SK-N-SH (cell line): ENCODE measurements at regions of chr9 and their contacts with region 1.

Region 1: DNA sequence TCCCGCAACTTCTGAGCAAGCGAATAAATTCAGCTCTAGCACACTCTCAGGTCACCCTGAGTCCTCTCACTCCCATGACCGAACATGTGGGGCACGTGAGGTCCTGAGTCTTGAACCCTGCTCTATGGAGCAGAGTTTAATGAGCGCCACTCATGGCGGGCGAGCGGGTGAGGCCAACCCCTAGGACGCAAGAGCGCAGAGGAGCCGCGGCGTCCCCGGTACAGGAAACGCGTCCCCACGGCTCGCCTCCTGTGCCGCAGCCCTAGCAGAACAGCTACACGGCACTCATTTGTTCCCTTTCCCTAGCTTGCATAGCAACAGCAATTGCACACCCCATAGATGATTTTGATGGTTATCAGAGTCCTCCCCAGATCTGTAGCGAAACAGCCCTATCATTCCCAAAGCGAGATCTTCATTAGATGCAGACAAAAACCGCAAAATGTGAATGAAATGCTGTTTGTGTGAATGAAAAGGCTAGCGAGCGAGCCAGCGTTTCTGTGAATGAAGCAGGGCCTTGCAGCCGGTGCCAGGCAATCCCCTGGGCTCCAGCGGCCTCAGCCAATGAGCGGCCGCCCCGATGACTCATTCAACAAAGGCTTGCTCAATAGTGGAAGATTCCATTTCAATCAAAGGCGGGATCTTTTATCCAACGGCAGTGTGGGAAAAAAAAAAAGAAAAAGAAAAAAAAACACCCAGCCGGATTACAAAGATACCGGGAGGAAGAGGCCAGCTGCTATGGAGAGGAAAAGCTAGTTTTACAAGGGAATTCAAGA is 1.5 kb upstream of the SHC3 start:
- DNase-seq: peak; percentile 88
- H3K4me3 ChIP-seq: peak overlapping the region; percentile 49 to 69
- H3K27ac ChIP-seq: peak overlapping the region; percentile 94 to 96
- H3K4me1 ChIP-seq: peaks cover 19 to 32% of the 10 kb centered on the region in 2 experiments
- H3K27me3 ChIP-seq: no peaks in the 10 kb centered on the region
- CTCF ChIP-seq: peak; percentile 6; the same call in 1 of the 2 replicates
- EP300 ChIP-seq: 0 out of 4 replicates have a peak, but pooled peaks of 1 of the 2 experiments have one; percentile 19
- RAD21 ChIP-seq: no peak

Region 2: GRCh38 chr9:89106224-89106851 is 73.7 kb before region 1 on chr9:
- CTCF ChIA-PET with region 1: no interaction called
- POLR2A ChIA-PET with region 1: no interaction called
- DNase-seq: no peak
- H3K4me3 ChIP-seq: no peak overlapping the region
- H3K27ac ChIP-seq: no peak overlapping the region
- H3K4me1 ChIP-seq: no peaks in the 10 kb centered on the region; a peak in 1 of 4 replicates
- H3K27me3 ChIP-seq: no peaks in the 10 kb centered on the region
- CTCF ChIP-seq: no peak
- EP300 ChIP-seq: no peak
- RAD21 ChIP-seq: no peak

Region 3: GRCh38 chr9:89278997-89279739 is 99.1 kb after region 1 on chr9:
- CTCF ChIA-PET with region 1: interaction called, 64 read pairs
- POLR2A ChIA-PET with region 1: interaction called, 7 read pairs
- DNase-seq: peak; percentile 68
- H3K4me3 ChIP-seq: no peak overlapping the region
- H3K27ac ChIP-seq: no peak overlapping the region
- H3K4me1 ChIP-seq: no peaks in the 10 kb centered on the region
- H3K27me3 ChIP-seq: no peaks in the 10 kb centered on the region
- CTCF ChIP-seq: peak; percentile 90
- EP300 ChIP-seq: no peak
- RAD21 ChIP-seq: peak; percentile 90

Region 4: DNA sequence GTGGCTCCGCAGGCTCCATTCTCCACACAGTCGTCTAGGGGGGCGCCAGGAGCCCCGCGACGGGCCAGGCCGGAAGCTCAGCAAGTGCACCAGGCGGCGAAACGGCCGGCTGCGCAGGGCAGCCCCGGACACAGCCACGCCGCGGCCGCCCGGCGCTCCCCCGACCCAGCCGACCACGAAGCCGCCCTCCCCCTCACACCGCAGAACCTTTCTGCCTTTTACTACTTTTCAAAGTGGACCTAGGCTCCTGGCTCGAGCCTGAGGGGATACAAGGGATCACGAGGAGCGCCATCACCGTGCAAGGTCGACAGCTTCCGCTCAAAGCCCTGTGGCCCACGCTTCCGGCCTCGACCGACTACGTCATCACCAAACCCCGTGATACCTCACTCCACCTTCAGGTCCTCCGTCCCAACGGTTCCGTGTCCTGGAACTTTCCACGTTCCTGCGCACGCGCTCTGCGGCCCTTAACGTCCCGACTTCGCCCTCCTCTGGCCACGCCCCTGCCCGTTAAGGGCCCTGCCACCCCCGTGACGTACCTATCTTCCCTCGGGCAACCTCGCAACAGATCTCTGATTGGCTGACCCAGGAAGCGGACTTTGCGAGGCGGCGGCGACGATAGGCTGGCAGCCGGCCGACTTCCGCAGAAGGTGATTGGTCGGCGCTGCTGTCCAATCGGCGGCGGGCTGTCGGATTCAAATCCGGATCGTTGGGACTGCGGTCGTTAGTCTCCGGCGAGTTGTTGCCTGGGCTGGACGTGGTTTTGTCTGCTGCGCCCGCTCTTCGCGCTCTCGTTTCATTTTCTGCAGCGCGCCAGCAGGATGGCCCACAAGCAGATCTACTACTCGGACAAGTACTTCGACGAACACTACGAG is 130.6 kb after region 1 on chr9 and contains the start of gene CKS2:
- CTCF ChIA-PET with region 1: interaction called, 3 read pairs
- POLR2A ChIA-PET with region 1: interaction called, 10 read pairs
- DNase-seq: peak; percentile 98
- H3K4me3 ChIP-seq: peak within 1 kb of the TSS; percentile 92 to 95
- H3K27ac ChIP-seq: peak within 1 kb of the TSS; percentile 96 to 98
- H3K4me1 ChIP-seq: peaks cover 8 to 19% of the 10 kb centered on the region in 2 experiments; a peak in 3 of 4 replicates
- H3K27me3 ChIP-seq: no peaks in the 10 kb centered on the region
- CTCF ChIP-seq: no peak
- EP300 ChIP-seq: peak in 1 of 2 experiments; percentile 85; a peak in 3 of 4 replicates
- RAD21 ChIP-seq: no peak
- polyA plus RNA-seq, gene CKS2: 277 and 362 TPM in 2 replicates